HCT116 (cell line): ENCODE measurements at regions of chr14 and their contacts with region 1.

Region 1: DNA sequence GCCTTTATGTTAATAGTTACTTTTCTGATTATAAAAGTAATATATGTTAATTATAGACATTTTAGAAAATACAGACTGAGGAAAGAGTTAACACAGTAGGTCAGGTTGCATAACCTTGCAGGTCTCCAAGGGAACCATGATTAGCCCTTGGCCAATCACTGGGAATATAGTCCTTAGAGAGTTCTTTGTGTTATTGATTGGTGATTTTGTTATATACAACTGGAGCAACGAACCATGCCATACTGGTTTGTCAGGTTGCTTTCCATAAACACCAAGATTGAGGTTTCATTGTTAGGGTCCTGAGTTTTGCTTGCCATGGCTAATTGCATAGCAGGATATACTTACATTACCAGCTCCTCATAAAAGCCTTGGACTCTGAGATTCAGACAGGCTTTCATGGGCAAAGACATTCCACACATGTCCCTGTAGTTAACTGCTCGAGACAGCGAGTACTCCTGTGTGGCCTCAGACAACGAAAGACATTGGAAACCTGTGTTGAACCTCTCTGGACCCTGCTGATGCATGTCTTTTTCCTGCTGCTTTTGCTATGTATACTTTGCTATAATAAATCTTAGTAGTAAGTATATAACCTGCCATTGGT is 33.7 kb downstream of the MAPK1IP1L start:
- DNase-seq: no peak
- ATAC-seq: no peak
- H3K4me3 ChIP-seq: no peak overlapping the region
- H3K27ac ChIP-seq: no peak overlapping the region
- H3K4me1 ChIP-seq: peaks cover 0 to 19% of the 10 kb centered on the region in 2 experiments; a peak in 3 of 4 replicates
- H3K27me3 ChIP-seq: no peaks in the 10 kb centered on the region
- CTCF ChIP-seq: no peak
- POLR2A ChIP-seq: no peak
- RAD21 ChIP-seq: no peak

Region 2: DNA sequence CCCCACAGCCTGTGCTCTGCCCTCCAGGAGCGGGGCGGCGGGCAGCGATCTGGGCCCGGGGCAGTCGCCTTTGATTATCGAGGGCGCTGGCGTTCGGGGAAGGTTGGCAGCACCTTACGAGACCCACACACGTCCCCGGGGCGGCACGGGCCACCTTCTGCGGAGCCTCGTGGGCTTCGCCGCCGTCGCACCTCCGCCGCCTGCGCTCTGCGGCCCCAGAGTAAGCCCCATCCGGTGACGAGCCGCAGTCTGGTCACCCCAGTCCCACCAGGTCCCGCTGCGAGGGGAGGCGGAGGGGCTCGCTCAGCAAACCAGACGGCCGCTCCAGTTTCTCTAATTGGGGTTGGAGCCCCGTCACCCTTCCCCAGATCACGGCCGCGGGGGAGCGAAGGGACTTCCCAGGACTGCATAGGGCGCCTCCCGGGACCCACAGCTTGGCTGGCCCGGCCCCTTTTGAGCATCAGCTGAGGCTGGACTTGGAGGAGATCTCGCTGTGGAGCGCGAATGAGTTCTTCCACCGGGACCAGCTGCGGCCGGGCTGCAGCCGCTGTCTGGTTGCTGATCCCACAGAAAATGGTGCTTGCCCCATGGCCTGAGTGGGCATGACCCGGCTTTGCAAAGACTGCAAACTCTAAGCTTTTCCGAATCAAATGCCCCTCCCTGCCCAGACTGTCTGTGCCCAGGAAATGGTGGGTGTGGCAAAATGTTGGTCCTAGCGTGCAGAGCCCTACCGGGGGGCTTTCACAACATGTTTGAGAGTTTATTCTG is 44.5 kb after region 1 on chr14:
- CTCF ChIA-PET with region 1: interaction called, 5 read pairs
- POLR2A ChIA-PET with region 1: no interaction called
- RAD21 ChIA-PET with region 1: interaction called in 1 of 2 experiments, 3 read pairs
- intact Hi-C with region 1: loop called (anchors 2 kb)
- DNase-seq: no peak
- ATAC-seq: peak; percentile 73
- H3K4me3 ChIP-seq: peak overlapping the region; percentile 74 to 80
- H3K27ac ChIP-seq: peak overlapping the region; percentile 79
- H3K4me1 ChIP-seq: peaks cover 30 to 61% of the 10 kb centered on the region in 2 experiments
- H3K27me3 ChIP-seq: no peaks in the 10 kb centered on the region
- CTCF ChIP-seq: no peak
- POLR2A ChIP-seq: no peak
- RAD21 ChIP-seq: no peak

Region 3: DNA sequence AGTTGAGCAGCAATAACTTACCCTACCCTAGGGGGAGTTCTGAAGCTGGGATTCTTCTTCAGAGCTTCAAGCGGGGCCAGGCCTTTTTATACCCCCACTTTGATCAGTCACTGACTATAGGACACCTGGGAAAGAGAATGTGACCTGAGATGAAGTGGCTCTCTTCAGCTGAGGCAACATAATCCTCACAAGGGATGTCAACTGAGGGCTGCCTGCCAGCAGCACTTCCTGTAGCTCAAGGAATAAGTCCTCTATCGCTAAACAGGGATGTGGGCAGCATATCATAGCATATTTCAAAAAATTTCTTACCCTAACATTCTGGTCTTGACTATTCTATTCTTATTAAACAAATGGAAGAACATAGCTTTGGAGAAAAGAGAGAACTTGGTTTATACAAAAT is 61.3 kb after region 1 on chr14:
- CTCF ChIA-PET with region 1: interaction called, 3 read pairs
- POLR2A ChIA-PET with region 1: no interaction called
- RAD21 ChIA-PET with region 1: no interaction called
- intact Hi-C with region 1: loop called (anchors 5 kb)
- DNase-seq: no peak
- ATAC-seq: no peak; the same call in 1 of the 2 replicates
- H3K4me3 ChIP-seq: no peak overlapping the region
- H3K27ac ChIP-seq: no peak overlapping the region
- H3K4me1 ChIP-seq: no peaks in the 10 kb centered on the region
- H3K27me3 ChIP-seq: no peaks in the 10 kb centered on the region
- CTCF ChIP-seq: no peak
- POLR2A ChIP-seq: no peak
- RAD21 ChIP-seq: no peak

Region 4: DNA sequence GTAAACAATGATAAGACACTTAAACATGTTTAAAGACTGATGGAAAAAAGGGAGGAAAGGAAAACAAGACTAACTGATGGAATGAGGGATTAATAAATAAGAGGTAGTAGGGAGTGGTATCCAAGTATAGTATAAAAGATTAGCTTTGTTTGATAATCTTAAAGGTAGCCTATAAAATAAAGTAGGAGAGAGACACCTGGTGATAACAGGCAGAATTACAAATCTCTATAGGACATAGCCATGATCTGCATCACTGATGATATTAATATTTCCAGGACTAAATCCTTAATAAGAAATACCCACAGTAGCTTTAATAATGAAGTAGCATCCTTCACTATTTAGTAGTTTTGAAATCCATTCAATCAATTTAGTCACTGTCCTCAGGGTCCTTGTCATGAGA is 75.8 kb after region 1 on chr14:
- CTCF ChIA-PET with region 1: interaction called, 46 read pairs
- POLR2A ChIA-PET with region 1: interaction called, 3 read pairs
- RAD21 ChIA-PET with region 1: interaction called, 4 to 15 read pairs
- intact Hi-C with region 1: loop called (anchors 1 kb)
- DNase-seq: peak; percentile 6
- ATAC-seq: peak; percentile 73
- H3K4me3 ChIP-seq: no peak overlapping the region
- H3K27ac ChIP-seq: no peak overlapping the region
- H3K4me1 ChIP-seq: no peaks in the 10 kb centered on the region
- H3K27me3 ChIP-seq: no peaks in the 10 kb centered on the region
- CTCF ChIP-seq: peak; percentile 27 to 72 (median 62)
- POLR2A ChIP-seq: no peak
- RAD21 ChIP-seq: peak; percentile 79

Region 5: DNA sequence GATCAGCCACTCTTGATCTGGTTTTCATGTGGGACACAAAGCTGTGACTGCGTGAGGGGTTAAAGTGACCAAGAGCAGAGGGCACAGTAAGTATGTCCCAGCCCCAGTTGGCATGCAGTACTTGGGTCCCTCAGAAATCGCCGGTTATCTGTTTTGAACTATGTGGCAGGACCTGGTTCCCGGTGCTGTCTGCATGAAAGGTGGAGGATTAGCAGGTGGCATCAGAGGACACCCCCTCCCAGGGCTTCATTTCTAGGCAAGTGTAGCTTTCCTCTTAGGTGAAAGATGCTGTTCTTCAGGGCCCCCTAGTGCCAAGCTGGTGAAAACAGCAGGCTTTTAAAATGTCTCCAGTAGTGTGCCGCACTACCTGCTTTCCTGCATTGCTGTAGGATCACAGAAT is 269.3 kb after region 1 on chr14:
- CTCF ChIA-PET with region 1: no interaction called
- POLR2A ChIA-PET with region 1: no interaction called
- RAD21 ChIA-PET with region 1: no interaction called
- intact Hi-C with region 1: loop called (anchors 10 kb)
- DNase-seq: peak; percentile 26
- ATAC-seq: peak; percentile 88
- H3K4me3 ChIP-seq: no peak overlapping the region
- H3K27ac ChIP-seq: no peak overlapping the region
- H3K4me1 ChIP-seq: peaks cover 0 to 11% of the 10 kb centered on the region in 2 experiments; a peak in 2 of 4 replicates
- H3K27me3 ChIP-seq: no peaks in the 10 kb centered on the region
- CTCF ChIP-seq: peak; percentile 63 to 73 (median 70); a peak in 5 of 6 replicates
- POLR2A ChIP-seq: no peak
- RAD21 ChIP-seq: peak; percentile 74

Region 6: DNA sequence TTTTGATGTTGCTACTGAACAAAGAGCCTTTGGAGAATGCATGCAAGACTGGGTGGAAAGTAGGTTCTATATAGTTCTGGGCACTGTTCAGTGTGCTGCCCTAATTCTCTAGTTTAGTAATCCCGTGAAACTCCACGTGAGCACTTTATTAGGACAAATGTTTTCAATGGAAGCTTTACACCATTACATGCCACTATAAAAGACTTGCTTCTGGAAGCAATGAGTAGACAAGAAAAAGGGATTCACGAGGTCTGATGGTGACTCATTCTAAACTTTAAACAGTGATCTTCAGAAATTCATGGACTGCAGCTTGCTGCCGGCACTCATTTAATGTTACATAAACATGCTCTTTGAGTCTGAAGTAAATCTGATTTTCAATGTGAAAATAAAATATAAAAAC is 304.2 kb after region 1 on chr14:
- CTCF ChIA-PET with region 1: no interaction called
- POLR2A ChIA-PET with region 1: no interaction called
- RAD21 ChIA-PET with region 1: no interaction called
- intact Hi-C with region 1: no loop called
- DNase-seq: no peak
- ATAC-seq: no peak
- H3K4me3 ChIP-seq: no peak overlapping the region
- H3K27ac ChIP-seq: no peak overlapping the region
- H3K4me1 ChIP-seq: peaks cover 2 to 19% of the 10 kb centered on the region in 2 experiments; a peak in 3 of 4 replicates
- H3K27me3 ChIP-seq: no peaks in the 10 kb centered on the region
- CTCF ChIP-seq: no peak
- POLR2A ChIP-seq: no peak
- RAD21 ChIP-seq: no peak

Region 7: GRCh38 chr14:55454264-55455002 is 369.3 kb after region 1 on chr14:
- CTCF ChIA-PET with region 1: no interaction called
- POLR2A ChIA-PET with region 1: no interaction called
- RAD21 ChIA-PET with region 1: no interaction called
- intact Hi-C with region 1: no loop called
- DNase-seq: peak; percentile 83
- ATAC-seq: peak; percentile 85
- H3K4me3 ChIP-seq: peak overlapping the region; percentile 0 to 45; a peak in 3 of 4 replicates
- H3K27ac ChIP-seq: peak overlapping the region; percentile 83
- H3K4me1 ChIP-seq: peaks cover 41 to 67% of the 10 kb centered on the region in 2 experiments
- H3K27me3 ChIP-seq: no peaks in the 10 kb centered on the region
- CTCF ChIP-seq: no peak
- POLR2A ChIP-seq: no peak
- RAD21 ChIP-seq: 0 out of 2 replicates have a peak, but pooled peaks have one; percentile 7